AG04449 (cell line): ENCODE measurements at regions of chr7 and their contacts with region 1.

Region 1: GRCh38 chr7:90312745-90313144 is 8.4 kb downstream of the FAM237B start:
- DNase-seq: no peak
- H3K4me3 ChIP-seq: no peak overlapping the region
- CTCF ChIP-seq: peak; percentile 16

Region 2: GRCh38 chr7:90173127-90173844 is 139.5 kb before region 1 on chr7:
- CTCF ChIA-PET with region 1: no interaction called
- POLR2A ChIA-PET with region 1: no interaction called
- DNase-seq: no peak
- H3K4me3 ChIP-seq: no peak overlapping the region
- CTCF ChIP-seq: no peak

Region 3: DNA sequence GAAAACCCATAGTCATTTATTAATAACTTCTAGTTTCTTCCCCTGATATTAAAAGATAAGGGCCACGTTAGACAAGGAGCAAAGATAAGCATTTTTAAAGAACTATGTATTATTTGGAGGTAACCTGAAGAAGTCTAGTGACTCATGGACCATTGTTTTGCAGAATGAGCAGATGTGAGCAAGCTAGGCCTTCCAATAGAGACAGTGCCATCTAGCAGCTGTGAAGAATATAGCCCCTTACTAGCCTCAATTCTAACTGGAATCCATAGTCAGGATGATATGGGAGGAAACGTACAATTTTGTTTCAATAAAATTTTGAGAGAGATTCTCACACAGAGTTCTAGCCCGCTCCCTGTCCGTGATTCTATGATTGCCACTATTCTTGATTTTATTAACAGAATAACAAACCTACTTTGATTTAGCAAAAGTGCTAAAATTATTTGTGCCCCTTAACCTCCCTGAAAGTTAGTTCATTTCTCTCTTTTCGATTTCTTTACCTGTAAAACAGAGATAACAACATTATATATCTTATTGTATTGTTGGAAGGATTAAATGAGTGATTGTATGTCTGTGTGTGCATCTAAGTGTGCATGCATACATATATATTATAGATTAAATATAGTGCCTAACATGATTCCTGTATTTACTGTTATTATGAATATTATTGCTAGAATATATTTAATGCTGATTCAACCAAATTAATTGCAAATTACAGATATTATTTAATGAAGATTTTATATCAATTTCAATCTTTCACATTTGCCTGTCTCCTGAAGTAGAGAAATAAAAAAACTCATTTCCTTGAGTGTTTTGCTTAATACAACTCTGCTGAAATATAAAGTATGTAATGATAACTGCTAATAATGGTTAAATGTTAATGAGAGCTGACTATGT is 14.4 kb before region 1 on chr7:
- CTCF ChIA-PET with region 1: interaction called, 17 read pairs
- POLR2A ChIA-PET with region 1: no interaction called
- DNase-seq: no peak
- H3K4me3 ChIP-seq: no peak overlapping the region
- CTCF ChIP-seq: peak; percentile 61

Region 4: GRCh38 chr7:90453259-90453891 is 140.6 kb after region 1 on chr7:
- CTCF ChIA-PET with region 1: no interaction called
- POLR2A ChIA-PET with region 1: no interaction called
- DNase-seq: no peak
- H3K4me3 ChIP-seq: no peak overlapping the region
- CTCF ChIP-seq: no peak